GM12878 (cell line): ENCODE measurements at regions of chr2 and their contacts with region 1.

Region 1: GRCh38 chr2:240622531-240623235 is 2.6 kb upstream of the GPR35 start:
- DNase-seq: no peak
- ATAC-seq: no peak
- H3K4me3 ChIP-seq: no peak overlapping the region
- H3K27ac ChIP-seq: no peak overlapping the region
- H3K4me1 ChIP-seq: peaks cover 49% of the 10 kb centered on the region
- H3K27me3 ChIP-seq: no peaks in the 10 kb centered on the region
- CTCF ChIP-seq: no peak
- EP300 ChIP-seq: no peak
- POLR2A ChIP-seq: no peak
- RAD21 ChIP-seq: no peak

Region 2: GRCh38 chr2:240586198-240586918 is 36.3 kb before region 1 on chr2 and contains the start of gene CAPN10:
- CTCF ChIA-PET with region 1: interaction called, 3 read pairs
- POLR2A ChIA-PET with region 1: interaction called, 9 read pairs
- RAD21 ChIA-PET with region 1: interaction called, 12 read pairs
- SMC1A ChIA-PET with region 1: interaction called, 13 read pairs
- in situ Hi-C with region 1: no loop called
- intact Hi-C with region 1: loop called (anchors 2 kb)
- DNase-seq: peak; percentile 73
- ATAC-seq: peak; percentile 79
- H3K4me3 ChIP-seq: peak within 1 kb of the TSS; percentile 95
- H3K27ac ChIP-seq: peak within 1 kb of the TSS; percentile 92
- H3K4me1 ChIP-seq: peaks cover 34% of the 10 kb centered on the region
- H3K27me3 ChIP-seq: no peaks in the 10 kb centered on the region
- CTCF ChIP-seq: no peak
- EP300 ChIP-seq: no peak
- POLR2A ChIP-seq: peak; percentile 95
- RAD21 ChIP-seq: no peak
- polyA plus RNA-seq, gene CAPN10: 0.37 to 1.6 TPM

Region 3: GRCh38 chr2:240596491-240596931 is 26.2 kb before region 1 on chr2:
- CTCF ChIA-PET with region 1: no interaction called
- POLR2A ChIA-PET with region 1: no interaction called
- RAD21 ChIA-PET with region 1: no interaction called
- SMC1A ChIA-PET with region 1: no interaction called
- in situ Hi-C with region 1: no loop called
- intact Hi-C with region 1: no loop called
- DNase-seq: no peak
- ATAC-seq: no peak
- H3K4me3 ChIP-seq: no peak overlapping the region
- H3K27ac ChIP-seq: no peak overlapping the region
- H3K4me1 ChIP-seq: no peaks in the 10 kb centered on the region; the same call in 1 of the 2 replicates
- H3K27me3 ChIP-seq: no peaks in the 10 kb centered on the region
- CTCF ChIP-seq: no peak
- EP300 ChIP-seq: no peak
- POLR2A ChIP-seq: no peak
- RAD21 ChIP-seq: no peak